ENCODE measurements at regions of chr21 and their contacts with region 1.

Region 1: GRCh38 chr21:33947451-33948095 is 32.0 kb upstream of the ATP5PO start:
- DNase-seq: peak; percentile 93
- ATAC-seq: peak; percentile 93
- H3K4me3 ChIP-seq: peak overlapping the region; percentile 34 to 52
- H3K27ac ChIP-seq: peak overlapping the region; percentile 86
- H3K4me1 ChIP-seq: peaks cover 32 to 43% of the 10 kb centered on the region in 2 experiments
- H3K27me3 ChIP-seq: no peaks in the 10 kb centered on the region
- CTCF ChIP-seq: no peak
- POLR2A ChIP-seq: no peak
- RAD21 ChIP-seq: peak; percentile 33; the same call in 1 of the 2 replicates

Region 2: GRCh38 chr21:34073032-34073869 is 125.7 kb after region 1 on chr21 and contains the starts of genes MRPS6 and SLC5A3:
- CTCF ChIA-PET with region 1: no interaction called
- POLR2A ChIA-PET with region 1: no interaction called
- RAD21 ChIA-PET with region 1: no interaction called
- intact Hi-C with region 1: loop called (anchors 10 kb)
- DNase-seq: peak; percentile 54
- ATAC-seq: peak; percentile 94
- H3K4me3 ChIP-seq: peak within 1 kb of the TSS; percentile 67 to 69
- H3K27ac ChIP-seq: peak within 1 kb of the TSS; percentile 86
- H3K4me1 ChIP-seq: peaks cover 10 to 14% of the 10 kb centered on the region in 2 experiments
- H3K27me3 ChIP-seq: no peaks in the 10 kb centered on the region
- CTCF ChIP-seq: no peak
- POLR2A ChIP-seq: peak; percentile 93
- RAD21 ChIP-seq: no peak
- total RNA-seq, gene MRPS6: 55.1 TPM
- total RNA-seq, gene SLC5A3: 11.8 TPM

Region 3: DNA sequence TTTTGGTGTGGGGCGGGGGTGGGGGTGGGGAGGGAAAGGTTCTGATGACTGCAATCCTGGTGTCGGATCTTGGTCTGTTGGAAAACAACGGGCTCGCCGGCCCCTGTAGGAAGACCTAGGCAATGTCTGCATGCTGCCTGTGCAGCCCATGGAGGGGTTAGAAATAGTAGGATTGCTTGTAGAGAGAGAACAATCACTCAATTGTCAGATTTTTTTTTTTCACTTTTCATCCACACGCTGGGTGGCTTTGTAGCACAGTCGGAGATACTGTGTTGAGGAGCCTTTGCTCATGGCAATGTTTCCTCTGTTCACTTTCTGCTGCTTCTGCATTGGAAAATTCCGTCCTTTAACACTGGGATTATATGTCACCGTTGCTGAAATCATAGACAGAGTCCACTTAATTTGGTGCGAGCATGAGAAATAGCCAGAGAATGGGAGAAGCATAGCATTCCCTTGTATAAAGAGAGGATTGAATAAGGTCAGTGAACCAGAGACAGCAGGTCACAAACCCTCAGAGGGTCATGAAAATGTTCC is 233.3 kb after region 1 on chr21:
- CTCF ChIA-PET with region 1: no interaction called
- POLR2A ChIA-PET with region 1: no interaction called
- RAD21 ChIA-PET with region 1: no interaction called
- intact Hi-C with region 1: no loop called
- DNase-seq: no peak
- ATAC-seq: no peak
- H3K4me3 ChIP-seq: no peak overlapping the region
- H3K27ac ChIP-seq: no peak overlapping the region
- H3K4me1 ChIP-seq: no peaks in the 10 kb centered on the region
- H3K27me3 ChIP-seq: no peaks in the 10 kb centered on the region
- CTCF ChIP-seq: no peak
- POLR2A ChIP-seq: no peak
- RAD21 ChIP-seq: no peak